Cardiac septum (tissue), 1 donor: ENCODE measurements at regions of chr14 and their contacts with region 1.

Region 1: GRCh38 chr14:37709419-37710195 is 114.2 kb downstream of the TTC6 start:
- DNase-seq: no peak

Region 2: GRCh38 chr14:37855871-37856270 is 146.3 kb after region 1 on chr14:
- intact Hi-C with region 1: no loop called
- DNase-seq: no peak

Region 3: GRCh38 chr14:37874429-37875191 is 165.0 kb after region 1 on chr14:
- intact Hi-C with region 1: loop called (anchors 2 kb)
- DNase-seq: peak; percentile 89